Calu3 (cell line): ENCODE measurements at regions of chr21 and their contacts with region 1.

Region 1: GRCh38 chr21:35020902-35021301 is 28.2 kb downstream of the RUNX1 start:
- DNase-seq: no peak
- H3K4me3 Mint-ChIP-seq: no peak overlapping the region
- H3K27ac Mint-ChIP-seq: no peak overlapping the region
- H3K4me1 Mint-ChIP-seq: peaks cover 39% of the 10 kb centered on the region
- H3K27me3 Mint-ChIP-seq: no peaks in the 10 kb centered on the region
- CTCF ChIP-seq: no peak

Region 2: DNA sequence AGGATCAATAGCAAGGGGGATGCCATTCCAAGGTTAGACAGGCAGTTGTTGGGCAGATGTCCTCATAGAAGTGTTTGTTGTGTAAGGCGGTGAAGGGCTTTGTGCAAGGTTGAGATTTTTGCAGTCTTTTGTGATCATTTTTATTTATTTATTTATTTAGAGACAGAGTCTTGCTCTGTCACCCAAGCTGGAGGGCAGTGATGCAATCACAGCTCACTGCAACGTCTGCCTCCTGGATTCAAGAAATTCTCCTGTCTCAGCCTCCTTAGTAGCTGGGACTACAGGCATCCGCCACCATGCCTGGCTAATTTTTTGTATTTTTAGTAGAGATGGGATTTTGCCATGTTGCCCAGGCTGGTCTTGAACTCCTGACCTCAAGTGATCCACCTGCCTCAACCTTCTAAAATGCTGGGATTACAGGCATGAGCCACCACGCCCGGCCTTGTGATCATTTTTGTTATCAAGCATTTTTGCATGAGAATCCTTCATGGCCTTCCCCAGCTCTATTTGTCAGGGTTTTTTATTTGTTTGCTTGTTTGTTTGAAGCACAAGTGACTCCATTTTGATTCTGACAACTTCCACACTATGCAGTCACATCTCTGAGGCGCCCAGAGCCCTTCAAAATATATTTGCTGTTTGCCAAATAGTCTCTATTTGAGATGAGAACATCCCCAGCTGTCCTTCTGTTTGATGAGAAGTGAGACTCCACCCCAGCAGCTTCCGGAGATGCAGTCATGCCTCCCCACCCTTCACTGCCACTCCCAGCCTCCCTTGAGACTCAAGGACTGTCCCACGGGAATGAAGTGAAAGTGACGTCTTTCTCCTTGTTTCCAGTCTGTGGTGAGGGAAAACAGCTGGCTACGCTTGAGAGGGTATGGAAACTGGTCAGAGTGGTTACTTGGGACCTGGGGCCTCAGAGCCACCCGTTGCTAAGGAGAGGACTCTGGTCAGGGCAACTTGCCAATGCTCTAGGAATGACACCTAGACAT is 1579.1 kb before region 1 on chr21:
- CTCF ChIA-PET with region 1: interaction called, 12 read pairs
- intact Hi-C with region 1: no loop called
- DNase-seq: no peak
- H3K4me3 Mint-ChIP-seq: no peak overlapping the region
- H3K27ac Mint-ChIP-seq: no peak overlapping the region
- H3K4me1 Mint-ChIP-seq: no peaks in the 10 kb centered on the region
- H3K27me3 Mint-ChIP-seq: no peaks in the 10 kb centered on the region
- CTCF ChIP-seq: no peak